ENCODE measurements at regions of chr2 and their contacts with region 1.

Region 1: GRCh38 chr2:127479219-127479825 is 47.0 kb downstream of the IWS1 start:
- DNase-seq: peak; percentile 31 to 72
- ATAC-seq: peak; percentile 92 to 94
- H3K4me3 ChIP-seq: no peak overlapping the region
- H3K27ac ChIP-seq: no peak overlapping the region
- H3K4me1 ChIP-seq: no peaks in the 10 kb centered on the region
- CTCF ChIP-seq: peak; percentile 90
- EP300 ChIP-seq: no peak
- POLR2A ChIP-seq: no peak
- RAD21 ChIP-seq: peak; percentile 84 to 89

Region 2: GRCh38 chr2:127197475-127198385 is 281.6 kb before region 1 on chr2:
- CTCF ChIA-PET with region 1: interaction called, 12 read pairs
- POLR2A ChIA-PET with region 1: no interaction called
- DNase-seq: peak; percentile 65 to 79
- ATAC-seq: peak; percentile 99 to 100
- H3K4me3 ChIP-seq: no peak overlapping the region
- H3K27ac ChIP-seq: no peak overlapping the region
- H3K4me1 ChIP-seq: no peaks in the 10 kb centered on the region
- CTCF ChIP-seq: peak; percentile 80
- EP300 ChIP-seq: no peak
- POLR2A ChIP-seq: no peak
- RAD21 ChIP-seq: peak; percentile 95 to 97

Region 3: GRCh38 chr2:127293748-127294562 is 185.4 kb before region 1 on chr2 and contains the start of gene ERCC3:
- CTCF ChIA-PET with region 1: interaction called, 17 read pairs
- POLR2A ChIA-PET with region 1: interaction called, 4 read pairs
- DNase-seq: peak; percentile 85 to 86
- ATAC-seq: peak; percentile 99
- H3K4me3 ChIP-seq: peak within 1 kb of the TSS; percentile 91
- H3K27ac ChIP-seq: peak within 1 kb of the TSS; percentile 94 to 95
- H3K4me1 ChIP-seq: peaks cover 13% of the 10 kb centered on the region; the same call in 2 of the 3 replicates
- CTCF ChIP-seq: no peak
- EP300 ChIP-seq: no peak
- POLR2A ChIP-seq: peak; percentile 81
- RAD21 ChIP-seq: no peak; a peak in 1 of 5 replicates
- polyA plus RNA-seq, gene ERCC3: 68.3 and 79.0 TPM in 2 replicates

Region 4: GRCh38 chr2:127358044-127358443 is 121.3 kb before region 1 on chr2:
- CTCF ChIA-PET with region 1: interaction called, 10 read pairs
- POLR2A ChIA-PET with region 1: no interaction called
- DNase-seq: peak in 1 of 2 experiments; percentile 45
- ATAC-seq: peak; percentile 54 to 81; a peak in 4 of 6 replicates
- H3K4me3 ChIP-seq: no peak overlapping the region
- H3K27ac ChIP-seq: no peak overlapping the region
- H3K4me1 ChIP-seq: peaks cover 70% of the 10 kb centered on the region
- CTCF ChIP-seq: no peak
- EP300 ChIP-seq: no peak
- POLR2A ChIP-seq: no peak
- RAD21 ChIP-seq: no peak

Region 5: DNA sequence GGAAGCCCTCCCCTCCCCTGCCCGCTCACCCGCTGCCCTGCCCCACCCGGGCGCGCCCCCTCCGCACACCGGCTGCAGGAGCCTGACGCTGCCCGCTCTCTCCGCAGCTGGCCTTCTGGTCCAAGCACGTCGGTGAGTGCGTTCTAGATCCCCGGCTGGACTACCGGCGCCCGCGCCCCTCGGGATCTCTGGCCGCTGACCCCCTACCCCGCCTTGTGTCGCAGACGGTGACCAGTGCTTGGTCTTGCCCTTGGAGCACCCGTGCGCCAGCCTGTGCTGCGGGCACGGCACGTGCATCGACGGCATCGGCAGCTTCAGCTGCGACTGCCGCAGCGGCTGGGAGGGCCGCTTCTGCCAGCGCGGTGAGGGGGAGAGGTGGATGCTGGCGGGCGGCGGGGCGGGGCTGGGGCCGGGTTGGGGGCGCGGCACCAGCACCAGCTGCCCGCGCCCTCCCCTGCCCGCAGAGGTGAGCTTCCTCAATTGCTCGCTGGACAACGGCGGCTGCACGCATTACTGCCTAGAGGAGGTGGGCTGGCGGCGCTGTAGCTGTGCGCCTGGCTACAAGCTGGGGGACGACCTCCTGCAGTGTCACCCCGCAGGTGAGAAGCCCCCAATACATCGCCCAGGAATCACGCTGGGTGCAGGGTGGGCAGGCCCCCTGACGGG is 56.4 kb before region 1 on chr2:
- CTCF ChIA-PET with region 1: interaction called, 13 read pairs
- POLR2A ChIA-PET with region 1: no interaction called
- DNase-seq: no peak
- ATAC-seq: peak; percentile 51 to 76
- H3K4me3 ChIP-seq: peak overlapping the region; percentile 64
- H3K27ac ChIP-seq: peak overlapping the region; percentile 75 to 86
- H3K4me1 ChIP-seq: no peaks in the 10 kb centered on the region
- CTCF ChIP-seq: 0 out of 3 replicates have a peak, but pooled peaks have one; percentile 7
- EP300 ChIP-seq: no peak
- POLR2A ChIP-seq: no peak
- RAD21 ChIP-seq: 0 out of 5 replicates have a peak, but pooled peaks of 1 of the 2 experiments have one; percentile 12

Region 6: DNA sequence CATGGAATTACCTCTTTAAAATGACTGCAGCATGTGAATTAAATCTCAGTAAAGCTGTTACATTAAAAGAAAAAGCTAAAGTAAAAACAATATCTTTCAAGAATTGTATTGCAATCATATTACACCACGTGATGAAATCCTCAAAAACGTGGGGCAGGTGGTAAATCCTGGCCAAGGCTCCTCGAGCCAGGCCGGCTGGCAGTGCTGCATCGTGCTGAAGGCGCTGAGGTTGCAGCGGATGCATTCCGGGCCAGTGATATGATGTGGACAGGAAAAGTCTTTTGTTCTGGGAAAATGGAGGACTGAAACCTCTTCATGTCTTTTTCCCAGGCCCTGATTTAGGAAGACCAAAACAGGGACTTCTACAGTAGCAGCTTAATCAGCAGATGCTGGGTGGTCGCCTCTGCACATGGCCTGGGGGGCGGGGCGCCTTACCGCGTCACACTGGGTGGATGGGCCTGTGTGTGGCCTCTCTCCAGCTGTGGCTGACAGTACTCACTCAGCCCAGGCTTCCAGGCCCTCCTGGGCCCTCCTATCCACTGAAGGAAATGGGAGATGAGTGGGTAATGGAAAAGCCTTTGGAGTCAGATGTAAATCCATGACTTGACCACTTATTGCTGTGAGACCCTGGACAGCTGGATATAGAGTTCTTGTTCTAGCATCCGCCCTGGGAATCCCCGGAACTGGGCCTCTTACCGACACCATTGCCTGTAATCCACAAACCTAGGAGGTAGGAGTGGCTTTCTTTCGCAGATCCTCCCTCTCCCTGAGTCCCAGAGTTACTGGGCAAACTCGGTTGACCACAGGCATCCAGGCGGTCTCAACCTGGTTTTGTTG is 15.9 kb before region 1 on chr2:
- CTCF ChIA-PET with region 1: interaction called, 17 read pairs
- POLR2A ChIA-PET with region 1: no interaction called
- DNase-seq: no peak
- ATAC-seq: peak in 1 of 2 experiments; percentile 45; a peak in 2 of 6 replicates
- H3K4me3 ChIP-seq: no peak overlapping the region
- H3K27ac ChIP-seq: no peak overlapping the region
- H3K4me1 ChIP-seq: no peaks in the 10 kb centered on the region
- CTCF ChIP-seq: no peak
- EP300 ChIP-seq: no peak
- POLR2A ChIP-seq: no peak
- RAD21 ChIP-seq: no peak

Region 7: DNA sequence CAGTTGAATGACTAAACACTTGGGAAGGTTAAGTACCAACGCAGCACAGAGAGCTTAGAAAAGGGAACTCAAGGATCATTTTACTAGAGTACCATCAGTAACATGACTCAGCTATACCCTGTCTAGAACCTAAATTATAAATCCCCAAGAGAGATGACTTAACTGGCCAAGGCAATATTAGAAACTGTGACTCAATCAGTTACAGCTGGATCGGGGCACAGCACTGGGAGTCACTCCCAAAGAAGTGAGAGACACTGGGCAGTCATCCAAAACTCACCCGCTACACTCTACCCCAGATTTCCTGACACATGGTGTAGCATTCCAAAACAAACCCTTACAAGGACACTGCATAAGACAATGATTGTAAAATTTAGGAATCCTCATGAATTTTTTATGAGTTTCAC is 29.3 kb after region 1 on chr2:
- CTCF ChIA-PET with region 1: interaction called, 10 read pairs
- POLR2A ChIA-PET with region 1: no interaction called
- DNase-seq: peak; percentile 87 to 91
- ATAC-seq: peak; percentile 92
- H3K4me3 ChIP-seq: 0 out of 3 replicates have a peak overlapping the region, but pooled peaks have one; percentile 10
- H3K27ac ChIP-seq: peak overlapping the region; percentile 68 to 81; a peak in 5 of 6 replicates
- H3K4me1 ChIP-seq: peaks cover 64% of the 10 kb centered on the region
- CTCF ChIP-seq: no peak
- EP300 ChIP-seq: no peak
- POLR2A ChIP-seq: no peak
- RAD21 ChIP-seq: no peak; a peak in 1 of 5 replicates

Measured in A549 (cell line).